CD8-positive, alpha-beta T cell (primary cell): ENCODE measurements at regions of chr5 and their contacts with region 1.

Region 1: GRCh38 chr5:81105261-81105877 is 127.8 kb upstream of the CKMT2 start:
- DNase-seq: peak in 1 of 9 experiments; percentile 13
- ATAC-seq: no peak
- H3K4me3 ChIP-seq: no peak overlapping the region
- H3K4me3 Mint-ChIP-seq: no peak overlapping the region
- H3K27ac ChIP-seq: no peak overlapping the region
- H3K27ac Mint-ChIP-seq: peak overlapping the region; percentile 82
- H3K4me1 ChIP-seq: peaks cover 15% of the 10 kb centered on the region
- H3K4me1 Mint-ChIP-seq: peaks cover 34% of the 10 kb centered on the region
- H3K27me3 ChIP-seq: no peaks in the 10 kb centered on the region
- H3K27me3 Mint-ChIP-seq: no peaks in the 10 kb centered on the region
- CTCF ChIP-seq: no peak

Region 2: DNA sequence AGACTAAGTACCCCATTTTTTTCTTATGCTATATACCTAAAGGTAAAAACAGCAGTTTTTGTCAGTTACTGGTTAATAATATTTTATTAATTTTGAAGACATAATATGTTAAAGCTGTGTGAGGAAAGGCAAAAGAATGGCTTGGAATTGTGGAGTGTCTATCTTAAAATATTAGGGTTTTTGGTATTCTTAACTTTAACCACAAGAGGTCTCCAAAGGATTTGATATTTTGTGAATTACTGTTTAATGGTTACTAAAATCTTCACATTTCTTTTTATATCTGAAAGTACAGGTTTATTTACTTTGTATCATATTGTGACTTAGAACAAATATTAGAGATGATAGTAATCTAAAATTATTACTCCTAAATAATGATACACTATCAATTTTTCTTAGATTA is 418.6 kb before region 1 on chr5:
- CTCF ChIA-PET with region 1: interaction called, 14 read pairs
- POLR2A ChIA-PET with region 1: no interaction called
- intact Hi-C with region 1: loop called (anchors 1 kb)
- DNase-seq: peak in 2 of 9 experiments; percentile 35 to 50
- ATAC-seq: no peak
- H3K4me3 ChIP-seq: no peak overlapping the region
- H3K4me3 Mint-ChIP-seq: no peak overlapping the region
- H3K27ac ChIP-seq: no peak overlapping the region
- H3K27ac Mint-ChIP-seq: no peak overlapping the region
- H3K4me1 ChIP-seq: no peaks in the 10 kb centered on the region
- H3K4me1 Mint-ChIP-seq: peaks cover 16% of the 10 kb centered on the region
- H3K27me3 ChIP-seq: no peaks in the 10 kb centered on the region
- H3K27me3 Mint-ChIP-seq: no peaks in the 10 kb centered on the region
- CTCF ChIP-seq: peak; percentile 54

Region 3: GRCh38 chr5:80871541-80871961 is 233.8 kb before region 1 on chr5:
- CTCF ChIA-PET with region 1: no interaction called
- POLR2A ChIA-PET with region 1: no interaction called
- intact Hi-C with region 1: loop called in 1 of 2 experiments (anchors 10 kb)
- DNase-seq: no peak
- ATAC-seq: no peak
- H3K4me3 ChIP-seq: no peak overlapping the region
- H3K4me3 Mint-ChIP-seq: no peak overlapping the region
- H3K27ac ChIP-seq: no peak overlapping the region
- H3K27ac Mint-ChIP-seq: no peak overlapping the region
- H3K4me1 ChIP-seq: no peaks in the 10 kb centered on the region
- H3K4me1 Mint-ChIP-seq: no peaks in the 10 kb centered on the region
- H3K27me3 ChIP-seq: no peaks in the 10 kb centered on the region
- H3K27me3 Mint-ChIP-seq: no peaks in the 10 kb centered on the region
- CTCF ChIP-seq: no peak

Region 4: GRCh38 chr5:80960531-80961375 is 144.6 kb before region 1 on chr5:
- CTCF ChIA-PET with region 1: interaction called, 10 read pairs
- POLR2A ChIA-PET with region 1: interaction called, 5 read pairs
- intact Hi-C with region 1: loop called in 1 of 2 experiments (anchors 1 kb)
- DNase-seq: peak; percentile 5 to 79 (median 51)
- ATAC-seq: peak; percentile 30
- H3K4me3 ChIP-seq: peak overlapping the region; percentile 61 to 81
- H3K4me3 Mint-ChIP-seq: peak overlapping the region; percentile 95
- H3K27ac ChIP-seq: peak overlapping the region in 1 of 2 experiments; percentile 50
- H3K27ac Mint-ChIP-seq: peak overlapping the region; percentile 95
- H3K4me1 ChIP-seq: peaks cover 53% of the 10 kb centered on the region
- H3K4me1 Mint-ChIP-seq: peaks cover 66% of the 10 kb centered on the region
- H3K27me3 ChIP-seq: peaks cover 0 to 7% of the 10 kb centered on the region in 2 experiments
- H3K27me3 Mint-ChIP-seq: peaks cover 4% of the 10 kb centered on the region
- CTCF ChIP-seq: no peak

Region 5: DNA sequence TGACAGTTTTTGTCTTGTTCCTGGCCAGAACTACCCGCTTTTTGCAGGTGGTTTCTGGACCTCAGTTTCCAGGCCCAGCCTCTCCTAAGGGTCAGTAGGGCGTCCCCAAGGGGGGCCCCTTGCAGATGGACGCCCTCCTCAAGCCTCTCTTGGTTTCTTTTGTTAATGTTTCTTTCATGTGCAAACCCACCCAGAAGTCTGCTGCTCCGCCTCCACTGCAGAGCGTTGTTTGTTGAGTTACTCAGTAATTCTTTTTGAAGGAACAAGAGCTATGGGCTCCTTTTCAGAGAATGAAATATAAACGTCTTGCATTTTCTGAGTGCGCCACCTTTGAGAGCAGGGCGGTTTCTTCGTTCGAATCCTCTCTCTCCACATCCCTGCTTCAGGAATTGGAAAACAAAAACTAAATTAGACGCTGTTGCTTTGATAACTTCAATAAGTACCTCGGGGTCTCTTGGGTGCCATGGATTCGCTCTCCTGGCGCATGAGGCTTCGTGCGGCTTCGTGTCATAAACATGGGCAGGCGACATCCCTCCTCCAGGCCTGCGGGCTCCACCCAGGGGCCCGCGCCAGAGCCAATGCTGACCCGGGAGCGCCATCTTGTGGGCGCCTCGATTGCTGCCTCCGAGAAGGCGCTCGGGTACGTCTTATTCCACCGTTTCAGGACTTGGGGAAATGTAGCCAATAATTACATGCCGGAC is 89.4 kb after region 1 on chr5:
- CTCF ChIA-PET with region 1: interaction called, 3 read pairs
- POLR2A ChIA-PET with region 1: no interaction called
- intact Hi-C with region 1: loop called in 1 of 2 experiments (anchors 1 kb)
- DNase-seq: peak; percentile 57 to 87 (median 76)
- ATAC-seq: peak; percentile 100
- H3K4me3 ChIP-seq: no peak overlapping the region
- H3K4me3 Mint-ChIP-seq: no peak overlapping the region
- H3K27ac ChIP-seq: no peak overlapping the region
- H3K27ac Mint-ChIP-seq: no peak overlapping the region
- H3K4me1 ChIP-seq: peaks cover 6% of the 10 kb centered on the region
- H3K4me1 Mint-ChIP-seq: peaks cover 9% of the 10 kb centered on the region
- H3K27me3 ChIP-seq: no peaks in the 10 kb centered on the region
- H3K27me3 Mint-ChIP-seq: no peaks in the 10 kb centered on the region
- CTCF ChIP-seq: peak; percentile 96